CD4-positive, alpha-beta memory T cell (primary cell): ENCODE measurements at regions of chr10 and their contacts with region 1.

Region 1: DNA sequence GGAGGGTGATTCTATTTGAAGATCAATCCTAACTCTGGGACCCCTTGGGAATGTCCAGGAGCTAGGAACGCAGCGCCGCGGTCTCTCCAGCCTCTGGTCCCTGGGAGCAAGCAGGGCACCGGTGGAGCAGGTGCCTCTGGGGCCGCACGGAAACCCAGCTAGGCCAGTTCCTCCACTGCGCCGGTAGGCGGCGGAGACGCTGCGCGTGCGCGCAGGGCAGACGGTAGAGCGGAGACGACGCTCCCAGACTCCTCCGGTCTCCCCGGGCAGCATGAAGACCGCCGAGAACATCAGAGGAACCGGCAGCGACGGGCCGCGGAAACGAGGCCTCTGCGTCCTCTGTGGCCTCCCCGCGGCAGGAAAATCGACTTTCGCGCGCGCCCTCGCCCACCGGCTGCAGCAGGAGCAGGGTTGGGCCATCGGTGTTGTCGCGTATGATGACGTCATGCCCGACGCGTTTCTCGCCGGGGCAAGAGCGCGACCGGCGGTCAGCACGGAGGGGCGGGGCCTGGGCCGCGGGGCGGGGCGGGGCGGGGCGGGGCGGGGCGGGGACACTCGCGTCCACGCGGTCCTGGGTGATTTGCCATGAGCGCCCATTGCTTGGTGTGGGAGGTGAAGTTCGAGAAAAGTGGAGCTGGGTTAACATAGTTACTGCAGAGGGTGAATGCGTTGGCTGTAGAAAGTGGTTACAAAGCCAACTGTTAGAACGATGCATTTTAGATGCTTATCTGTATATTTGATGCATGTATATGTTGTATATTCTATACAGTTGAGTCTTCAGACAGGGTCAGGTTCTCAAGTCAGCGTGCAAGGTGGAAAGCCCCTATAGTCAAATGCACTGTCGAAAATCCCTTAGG is at the start of gene PSTK:
- DNase-seq: peak; percentile 90 to 94 (median 91)
- H3K4me3 ChIP-seq: peak within 1 kb of the TSS; percentile 19 to 88
- H3K4me3 Mint-ChIP-seq: peak within 1 kb of the TSS; percentile 90 to 94 (median 92)
- H3K27ac ChIP-seq: peak within 1 kb of the TSS; percentile 79
- H3K27ac Mint-ChIP-seq: peak within 1 kb of the TSS; percentile 96 to 98 (median 97)
- H3K4me1 ChIP-seq: peaks cover 13% of the 10 kb centered on the region
- H3K4me1 Mint-ChIP-seq: peaks cover 9 to 24% (median 15%) of the 10 kb centered on the region in 4 donors
- H3K27me3 ChIP-seq: no peaks in the 10 kb centered on the region
- H3K27me3 Mint-ChIP-seq: peaks cover 0 to 1% of the 10 kb centered on the region in 2 donors
- total RNA-seq, gene PSTK: 3.9 to 4.7 TPM

Region 2: GRCh38 chr10:122879339-122880273 is 100.8 kb before region 1 on chr10 and contains the start of gene FAM24B:
- CTCF ChIA-PET with region 1: no interaction called
- POLR2A ChIA-PET with region 1: interaction called, 7 read pairs
- intact Hi-C with region 1: loop called (anchors 1 kb)
- DNase-seq: peak; percentile 90 to 96 (median 96)
- H3K4me3 ChIP-seq: peak within 1 kb of the TSS; percentile 47 to 79
- H3K4me3 Mint-ChIP-seq: peak within 1 kb of the TSS; percentile 91 to 95 (median 92)
- H3K27ac ChIP-seq: peak within 1 kb of the TSS; percentile 68
- H3K27ac Mint-ChIP-seq: peak within 1 kb of the TSS; percentile 79 to 97 (median 95)
- H3K4me1 ChIP-seq: peaks cover 41% of the 10 kb centered on the region
- H3K4me1 Mint-ChIP-seq: peaks cover 31 to 55% (median 43%) of the 10 kb centered on the region in 4 donors
- H3K27me3 ChIP-seq: no peaks in the 10 kb centered on the region
- H3K27me3 Mint-ChIP-seq: no peaks in the 10 kb centered on the region
- total RNA-seq, gene FAM24B: 10.8 to 12.8 TPM

Region 3: DNA sequence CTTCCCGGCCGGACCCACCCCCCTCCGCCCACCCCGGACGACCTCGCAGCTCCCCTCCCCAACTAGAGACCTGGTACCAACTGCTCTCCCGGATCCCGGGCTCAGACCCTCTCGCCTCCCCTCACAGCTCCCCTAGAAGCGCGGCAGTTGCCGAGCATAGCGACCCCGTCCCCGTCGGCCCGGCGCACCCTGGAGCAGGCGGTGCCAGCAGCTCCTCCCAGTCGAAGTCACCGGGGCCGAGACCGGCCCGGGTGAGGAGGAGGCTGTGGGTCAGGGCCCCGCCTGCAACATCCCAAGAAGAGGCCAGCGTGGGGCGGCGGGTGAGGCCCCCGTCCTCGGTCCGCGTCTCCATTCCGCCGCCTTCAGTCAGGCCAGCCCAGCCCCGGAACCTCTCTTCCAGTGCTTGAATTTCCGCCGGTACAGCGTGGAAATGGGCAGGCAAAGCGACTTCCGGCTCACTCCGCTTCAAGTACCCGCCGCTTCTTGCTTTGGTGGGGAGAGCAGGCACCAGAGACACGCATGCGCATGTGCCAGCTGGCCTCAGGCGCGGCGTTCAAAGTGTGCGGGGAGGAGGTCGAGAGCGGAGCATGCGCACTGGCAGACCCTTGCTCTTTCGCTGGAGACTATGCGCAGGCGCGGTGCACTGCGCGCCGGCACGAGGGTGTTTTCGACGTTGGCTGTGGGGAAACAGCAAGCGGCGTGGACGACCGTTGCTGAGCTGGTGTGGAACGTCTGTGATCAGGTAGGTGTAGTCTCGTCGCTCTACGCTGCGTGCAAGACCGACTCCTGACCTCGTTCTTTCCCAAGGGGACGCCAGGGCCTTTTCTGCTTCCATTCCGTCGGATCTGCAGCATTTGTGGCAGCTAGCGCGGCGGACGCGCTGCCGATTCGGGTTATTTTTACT is 26.4 kb before region 1 on chr10 and contains the start of gene C10orf88:
- CTCF ChIA-PET with region 1: interaction called, 36 read pairs
- POLR2A ChIA-PET with region 1: interaction called, 18 read pairs
- intact Hi-C with region 1: loop called (anchors 1 kb)
- DNase-seq: peak; percentile 95 to 98 (median 98)
- H3K4me3 ChIP-seq: peak within 1 kb of the TSS; percentile 47 to 73
- H3K4me3 Mint-ChIP-seq: peak within 1 kb of the TSS; percentile 90 to 97 (median 92)
- H3K27ac ChIP-seq: peak within 1 kb of the TSS; percentile 57
- H3K27ac Mint-ChIP-seq: peak within 1 kb of the TSS; percentile 87 to 98 (median 93)
- H3K4me1 ChIP-seq: peaks cover 27% of the 10 kb centered on the region
- H3K4me1 Mint-ChIP-seq: peaks cover 17 to 43% (median 33%) of the 10 kb centered on the region in 4 donors
- H3K27me3 ChIP-seq: no peaks in the 10 kb centered on the region
- H3K27me3 Mint-ChIP-seq: peaks cover 0 to 2% of the 10 kb centered on the region in 2 donors
- total RNA-seq, gene C10orf88: 10.5 to 12.3 TPM

Region 4: DNA sequence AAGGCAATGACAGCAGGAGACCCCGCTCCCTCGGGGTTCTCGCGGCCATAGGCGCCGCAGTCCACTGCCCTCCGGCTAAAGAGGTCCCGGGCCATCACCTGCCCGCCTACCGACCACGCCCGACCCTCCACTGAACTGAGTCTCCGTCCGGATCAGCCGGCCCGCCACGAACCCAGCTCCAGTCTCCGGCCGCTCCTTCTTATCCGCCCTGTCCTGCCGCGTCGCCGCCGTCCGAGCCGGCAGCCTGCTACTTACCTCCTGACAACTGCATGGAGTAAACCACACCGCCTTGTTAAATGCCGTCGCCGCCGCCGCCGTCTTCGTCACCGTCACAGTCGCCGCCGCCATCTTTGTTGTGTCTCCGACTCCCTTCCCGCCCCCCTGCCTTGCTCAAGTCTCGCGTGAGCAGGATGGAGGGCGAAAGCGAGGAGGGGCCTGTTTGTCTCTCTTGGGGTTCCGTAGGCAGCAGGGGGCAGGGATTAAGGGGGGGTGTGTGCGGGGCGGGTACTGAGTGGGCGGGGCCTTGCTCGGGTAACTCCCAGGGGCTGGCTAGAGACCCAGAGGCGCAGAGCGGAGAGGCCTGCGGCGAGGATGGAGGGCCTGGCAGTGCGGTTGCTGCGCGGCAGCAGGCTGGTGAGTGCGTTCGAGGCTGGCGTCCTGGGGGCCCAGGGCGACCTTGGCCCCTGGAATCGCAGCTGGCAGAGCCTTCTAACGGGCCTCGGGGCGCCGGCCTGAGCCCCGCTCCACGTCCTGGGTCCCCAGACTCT is 28.2 kb after region 1 on chr10 and contains the starts of genes ACADSB and IKZF5:
- CTCF ChIA-PET with region 1: interaction called, 26 read pairs
- POLR2A ChIA-PET with region 1: interaction called, 74 read pairs
- intact Hi-C with region 1: loop called (anchors 1 kb)
- DNase-seq: peak; percentile 95 to 99 (median 97)
- H3K4me3 ChIP-seq: peak within 1 kb of the TSS; percentile 68 to 87
- H3K4me3 Mint-ChIP-seq: peak within 1 kb of the TSS; percentile 96 to 100 (median 99)
- H3K27ac ChIP-seq: peak within 1 kb of the TSS; percentile 91
- H3K27ac Mint-ChIP-seq: peak within 1 kb of the TSS; percentile 92 to 100 (median 99)
- H3K4me1 ChIP-seq: peaks cover 57% of the 10 kb centered on the region
- H3K4me1 Mint-ChIP-seq: peaks cover 41 to 72% (median 55%) of the 10 kb centered on the region in 4 donors
- H3K27me3 ChIP-seq: no peaks in the 10 kb centered on the region
- H3K27me3 Mint-ChIP-seq: no peaks in the 10 kb centered on the region
- total RNA-seq, gene ACADSB: 35.7 to 36.4 TPM
- total RNA-seq, gene IKZF5: 37.4 to 45.9 TPM

Region 5: DNA sequence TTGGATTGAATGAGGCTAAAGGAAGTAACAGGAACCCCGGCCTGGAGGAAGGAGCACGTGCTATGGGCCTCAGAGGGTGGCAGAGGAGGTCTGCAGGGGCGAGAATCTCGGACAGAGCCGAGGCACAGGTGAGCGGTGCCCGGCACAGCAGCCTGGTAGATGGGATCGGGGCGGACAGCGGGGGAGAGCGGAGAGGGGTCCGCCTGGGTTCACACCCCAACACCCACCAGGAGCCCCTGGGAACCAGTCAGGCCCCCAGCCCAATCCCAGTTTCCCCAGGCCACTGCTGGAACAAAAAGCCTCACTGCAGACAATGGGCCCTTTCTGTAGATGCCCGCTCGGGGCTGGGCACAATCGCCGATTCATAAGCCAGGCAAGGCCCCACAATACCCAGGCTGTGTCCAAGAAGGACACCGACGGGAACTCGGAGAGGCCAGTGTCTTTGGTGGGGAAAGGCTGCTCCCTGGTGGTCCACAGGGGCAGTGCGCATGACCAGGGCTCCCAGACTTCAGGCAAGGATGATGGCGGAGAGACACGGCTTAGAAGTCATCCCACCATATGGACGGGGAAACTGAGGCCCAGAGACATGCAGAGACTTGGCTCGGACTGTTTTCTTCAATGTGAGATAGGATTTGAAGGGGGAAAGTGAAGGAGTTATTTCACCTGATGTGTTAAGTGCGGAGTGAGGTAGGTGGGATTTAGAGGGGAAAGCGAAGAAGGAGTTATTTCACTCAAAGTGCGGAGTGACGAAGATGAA is 578.8 kb after region 1 on chr10:
- CTCF ChIA-PET with region 1: interaction called, 3 read pairs
- POLR2A ChIA-PET with region 1: no interaction called
- intact Hi-C with region 1: loop called (anchors 1 kb)
- DNase-seq: peak; percentile 39 to 64 (median 43)
- H3K4me3 ChIP-seq: no peak overlapping the region
- H3K4me3 Mint-ChIP-seq: no peak overlapping the region
- H3K27ac ChIP-seq: no peak overlapping the region
- H3K27ac Mint-ChIP-seq: peak overlapping the region in 2 of 7 donors; percentile 32 to 38
- H3K4me1 ChIP-seq: no peaks in the 10 kb centered on the region
- H3K4me1 Mint-ChIP-seq: peaks cover 0 to 2% (median 0%) of the 10 kb centered on the region in 4 donors
- H3K27me3 ChIP-seq: no peaks in the 10 kb centered on the region
- H3K27me3 Mint-ChIP-seq: peaks cover 5 to 18% of the 10 kb centered on the region in 2 donors